HepG2 (cell line): ENCODE measurements at regions of chr12 and their contacts with region 1.

Region 1: GRCh38 chr12:72264548-72265175 is 7.5 kb upstream of the TRHDE start:
- DNase-seq: peak; percentile 19
- ATAC-seq: no peak
- H3K4me3 ChIP-seq: no peak overlapping the region
- H3K27ac ChIP-seq: no peak overlapping the region
- H3K4me1 ChIP-seq: no peaks in the 10 kb centered on the region
- H3K27me3 ChIP-seq: peaks cover 0 to 1% of the 10 kb centered on the region in 2 experiments; a peak in 1 of 5 replicates
- CTCF ChIP-seq: peak; percentile 18; the same call in 1 of the 2 replicates
- EP300 ChIP-seq: no peak
- POLR2A ChIP-seq: no peak
- RAD21 ChIP-seq: no peak

Region 2: DNA sequence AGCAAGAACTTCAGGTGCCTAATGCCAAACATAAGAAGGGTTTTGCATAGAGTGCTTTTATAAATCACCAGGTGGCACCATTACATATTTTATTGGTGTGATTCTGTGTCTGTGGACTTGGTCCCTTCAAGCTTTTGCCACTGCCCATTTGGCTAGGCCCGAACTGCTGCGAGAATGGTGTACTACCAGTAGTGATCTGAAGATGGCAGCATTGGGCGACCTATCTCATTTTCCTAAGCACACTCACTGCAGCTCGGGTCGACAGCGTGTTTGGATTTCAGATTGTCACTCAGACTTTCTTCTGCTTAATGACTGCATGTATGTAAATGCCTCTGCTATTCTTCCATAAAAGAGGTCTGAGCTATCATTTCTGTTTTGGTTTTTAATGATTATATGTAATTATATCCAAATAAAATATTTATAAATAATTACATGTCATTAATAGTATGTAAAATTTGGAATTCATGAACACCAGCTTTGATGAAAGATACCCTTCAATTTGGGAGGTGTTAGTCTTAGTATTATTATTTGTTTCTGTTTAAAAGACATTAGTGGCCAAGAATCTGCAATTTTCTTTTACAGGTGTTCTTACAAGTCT is 247.5 kb before region 1 on chr12:
- CTCF ChIA-PET with region 1: no interaction called
- POLR2A ChIA-PET with region 1: no interaction called
- in situ Hi-C with region 1: no loop called
- intact Hi-C with region 1: loop called (anchors 5 kb)
- DNase-seq: peak; percentile 62
- ATAC-seq: peak; percentile 97
- H3K4me3 ChIP-seq: no peak overlapping the region
- H3K27ac ChIP-seq: no peak overlapping the region
- H3K4me1 ChIP-seq: no peaks in the 10 kb centered on the region
- H3K27me3 ChIP-seq: no peaks in the 10 kb centered on the region; a peak in 1 of 5 replicates
- CTCF ChIP-seq: peak; percentile 87
- EP300 ChIP-seq: no peak
- POLR2A ChIP-seq: no peak
- RAD21 ChIP-seq: 0 out of 2 replicates have a peak, but pooled peaks have one; percentile 56